MCF 10A (cell line): ENCODE measurements at regions of chr4 and their contacts with region 1.

Region 1: DNA sequence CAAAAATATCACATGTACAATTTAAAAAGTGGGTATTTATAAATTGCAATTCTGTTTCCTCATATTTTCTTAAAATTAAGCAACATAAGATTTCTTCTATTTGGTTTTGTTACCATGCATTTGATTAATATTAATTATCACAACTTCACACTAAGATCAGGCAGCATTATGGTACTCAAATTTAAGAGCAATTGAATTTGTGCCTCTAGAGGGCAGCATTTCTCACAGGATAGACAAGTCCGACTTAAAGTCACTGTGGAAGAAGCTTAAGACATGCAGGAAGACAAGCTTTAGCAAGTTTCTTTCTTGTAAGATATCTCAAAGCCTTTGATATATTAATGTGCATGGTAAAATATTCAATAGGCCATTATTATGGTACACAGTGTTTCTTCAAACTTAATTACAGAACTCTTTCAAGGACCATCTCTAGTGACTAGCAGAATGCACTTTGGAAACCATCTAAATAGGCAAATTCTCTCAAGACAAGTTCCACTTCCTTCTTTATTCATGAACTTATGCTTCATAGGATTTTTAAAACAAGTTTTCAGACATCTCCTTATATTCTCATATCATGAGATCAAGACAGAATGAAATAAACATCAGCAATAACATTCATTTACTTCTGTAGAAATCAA is 35.0 kb downstream of the FBXW7 start:
- DNase-seq: peak; percentile 83
- H3K4me3 Mint-ChIP-seq: no peak overlapping the region
- H3K27ac Mint-ChIP-seq: no peak overlapping the region
- H3K4me1 Mint-ChIP-seq: peaks cover 12% of the 10 kb centered on the region
- H3K27me3 Mint-ChIP-seq: no peaks in the 10 kb centered on the region
- CTCF ChIP-seq: peak; percentile 66

Region 2: DNA sequence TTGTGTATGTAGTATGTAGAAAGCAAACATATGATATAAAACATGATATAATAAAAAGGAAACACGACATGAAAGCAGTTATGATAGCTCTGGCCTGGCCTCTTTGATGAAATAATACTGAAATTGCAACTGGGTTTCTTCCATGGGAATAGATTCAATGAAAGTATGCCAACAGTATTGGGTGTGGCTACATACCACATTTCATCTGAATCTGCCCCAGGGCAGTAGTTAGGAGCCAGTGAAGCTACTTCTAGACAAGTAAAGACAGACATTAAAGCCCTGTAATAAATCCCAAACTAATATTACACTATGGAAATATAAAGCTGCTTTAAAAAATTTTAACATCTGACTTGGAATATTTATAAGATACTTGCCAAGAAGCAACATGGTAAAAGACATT is 172.3 kb before region 1 on chr4:
- CTCF ChIA-PET with region 1: no interaction called
- POLR2A ChIA-PET with region 1: no interaction called
- intact Hi-C with region 1: no loop called
- DNase-seq: peak; percentile 87
- H3K4me3 Mint-ChIP-seq: no peak overlapping the region
- H3K27ac Mint-ChIP-seq: peak overlapping the region; percentile 49
- H3K4me1 Mint-ChIP-seq: peaks cover 24% of the 10 kb centered on the region
- H3K27me3 Mint-ChIP-seq: no peaks in the 10 kb centered on the region
- CTCF ChIP-seq: no peak

Region 3: GRCh38 chr4:152454398-152455011 is 46.4 kb before region 1 on chr4:
- CTCF ChIA-PET with region 1: interaction called, 8 read pairs
- POLR2A ChIA-PET with region 1: interaction called, 3 read pairs
- intact Hi-C with region 1: loop called (anchors 5 kb)
- DNase-seq: peak; percentile 24
- H3K4me3 Mint-ChIP-seq: no peak overlapping the region
- H3K27ac Mint-ChIP-seq: no peak overlapping the region
- H3K4me1 Mint-ChIP-seq: peaks cover 35% of the 10 kb centered on the region
- H3K27me3 Mint-ChIP-seq: no peaks in the 10 kb centered on the region
- CTCF ChIP-seq: peak; percentile 60

Region 4: GRCh38 chr4:152515678-152516077 is 14.8 kb after region 1 on chr4:
- CTCF ChIA-PET with region 1: interaction called, 24 read pairs
- POLR2A ChIA-PET with region 1: interaction called, 25 read pairs
- intact Hi-C with region 1: no loop called
- DNase-seq: peak; percentile 33
- H3K4me3 Mint-ChIP-seq: no peak overlapping the region
- H3K27ac Mint-ChIP-seq: peak overlapping the region; percentile 66
- H3K4me1 Mint-ChIP-seq: peaks cover 26% of the 10 kb centered on the region
- H3K27me3 Mint-ChIP-seq: no peaks in the 10 kb centered on the region
- CTCF ChIP-seq: no peak

Region 5: DNA sequence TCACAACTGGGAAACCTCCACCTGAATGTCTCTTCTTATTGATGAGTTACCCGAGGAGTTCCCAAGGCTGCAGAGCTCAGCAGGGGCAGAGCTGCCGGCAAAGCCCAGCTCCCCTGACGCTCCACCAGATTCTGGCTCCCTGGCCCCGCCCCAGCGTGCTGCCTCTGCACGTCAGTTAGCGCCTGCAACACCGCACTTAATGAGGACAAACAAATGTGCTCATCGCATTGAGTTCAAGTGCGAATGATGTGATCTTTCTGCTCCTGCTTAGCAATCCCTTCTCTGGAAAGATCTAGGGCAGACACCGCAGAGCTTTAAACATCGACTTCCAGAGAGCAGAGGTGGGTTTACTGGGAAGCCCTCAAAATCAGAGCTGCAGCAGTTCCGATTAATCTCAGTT is 90.5 kb after region 1 on chr4:
- CTCF ChIA-PET with region 1: interaction called, 14 read pairs
- POLR2A ChIA-PET with region 1: interaction called, 13 read pairs
- intact Hi-C with region 1: no loop called
- DNase-seq: peak; percentile 8
- H3K4me3 Mint-ChIP-seq: peak overlapping the region; percentile 23
- H3K27ac Mint-ChIP-seq: no peak overlapping the region
- H3K4me1 Mint-ChIP-seq: peaks cover 21% of the 10 kb centered on the region
- H3K27me3 Mint-ChIP-seq: no peaks in the 10 kb centered on the region
- CTCF ChIP-seq: no peak

Region 6: GRCh38 chr4:152640058-152640833 is 139.3 kb after region 1 on chr4:
- CTCF ChIA-PET with region 1: interaction called, 131 read pairs
- POLR2A ChIA-PET with region 1: interaction called, 15 read pairs
- intact Hi-C with region 1: loop called (anchors 1 kb)
- DNase-seq: peak; percentile 38
- H3K4me3 Mint-ChIP-seq: no peak overlapping the region
- H3K27ac Mint-ChIP-seq: no peak overlapping the region
- H3K4me1 Mint-ChIP-seq: no peaks in the 10 kb centered on the region
- H3K27me3 Mint-ChIP-seq: no peaks in the 10 kb centered on the region
- CTCF ChIP-seq: peak; percentile 39

Region 7: DNA sequence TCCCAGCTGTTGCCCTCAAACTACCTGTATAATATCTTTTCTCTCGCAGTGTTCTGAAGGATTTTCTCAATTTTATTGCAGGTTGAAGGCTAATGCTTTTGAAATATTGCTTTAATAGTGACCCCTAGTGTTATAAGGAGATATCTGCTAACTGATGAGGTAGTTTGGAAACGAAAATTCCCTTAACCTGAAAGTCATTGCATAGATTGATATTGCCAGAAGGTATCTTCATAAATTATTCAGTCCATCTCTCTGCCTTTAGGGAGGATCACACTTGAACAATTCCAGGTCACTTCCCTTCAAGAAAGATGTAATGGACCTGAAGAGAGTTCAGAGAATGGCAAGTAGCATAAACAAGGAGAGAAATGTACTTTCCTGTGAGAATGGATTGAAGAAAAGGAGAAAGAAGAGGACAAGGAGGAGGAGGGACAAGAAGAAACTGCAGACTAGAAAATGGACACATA is 234.5 kb after region 1 on chr4:
- CTCF ChIA-PET with region 1: interaction called, 67 read pairs
- POLR2A ChIA-PET with region 1: interaction called, 3 read pairs
- intact Hi-C with region 1: loop called (anchors 1 kb)
- DNase-seq: peak; percentile 41
- H3K4me3 Mint-ChIP-seq: no peak overlapping the region
- H3K27ac Mint-ChIP-seq: no peak overlapping the region
- H3K4me1 Mint-ChIP-seq: peaks cover 10% of the 10 kb centered on the region
- H3K27me3 Mint-ChIP-seq: peaks cover 11% of the 10 kb centered on the region
- CTCF ChIP-seq: peak; percentile 62